Pancreas (tissue), 10 donors: ENCODE measurements at regions of chr1 and their contacts with region 1.

Region 1: DNA sequence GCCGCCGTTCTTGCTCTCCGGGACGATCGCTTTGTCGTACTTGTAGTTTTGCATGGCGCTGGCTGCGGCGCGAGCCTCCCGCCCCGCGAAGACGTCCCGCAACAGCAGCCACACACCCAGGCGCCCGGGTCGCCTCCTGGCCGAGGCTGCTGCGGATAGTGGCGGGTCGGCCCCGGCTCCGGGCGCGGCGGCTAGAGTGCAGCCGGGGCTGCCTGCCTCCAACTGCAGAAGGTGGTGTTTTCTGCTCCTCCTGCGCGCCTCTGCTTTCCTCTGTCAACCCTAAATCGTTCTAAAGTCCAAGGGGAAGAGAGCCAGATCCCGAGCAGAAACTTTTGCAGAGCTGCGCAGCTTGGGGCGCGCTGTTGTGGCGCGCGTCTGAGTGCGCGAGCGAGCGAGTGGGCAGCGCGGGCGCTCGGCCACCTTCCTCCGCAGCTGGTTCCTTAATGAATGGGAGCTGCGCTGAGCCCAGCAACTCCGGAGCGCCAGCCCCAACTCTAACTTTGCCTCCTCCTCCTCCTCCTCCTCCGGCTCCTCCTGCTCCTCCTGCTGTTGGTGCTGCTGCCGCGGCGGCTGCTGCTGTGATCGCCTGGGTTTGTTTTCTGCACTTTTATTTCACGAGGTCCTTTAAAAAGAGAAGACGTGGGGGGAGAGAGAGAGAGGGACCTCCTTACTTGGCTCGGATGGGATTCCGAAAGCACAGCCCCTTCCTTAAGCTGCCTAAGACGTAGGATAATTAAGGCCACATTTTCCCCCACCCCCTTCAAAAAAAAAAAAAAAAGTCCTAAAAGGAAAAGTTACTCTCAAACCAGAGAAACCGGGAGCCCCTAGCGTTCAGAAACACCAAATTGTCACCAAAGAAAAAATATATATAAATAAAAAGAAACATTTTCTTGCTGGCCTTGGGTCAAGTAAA is at the start of gene PLPP3:
- DNase-seq: peak; percentile 82 to 91 (median 85)
- ATAC-seq: peak; percentile 82 to 89 (median 86)
- H3K4me3 ChIP-seq: peak within 1 kb of the TSS; percentile 74 to 98 (median 91)
- H3K27ac ChIP-seq: peak within 1 kb of the TSS; percentile 84 to 95 (median 93)
- H3K4me1 ChIP-seq: peaks cover 6 to 43% (median 22%) of the 10 kb centered on the region in 3 donors
- H3K27me3 ChIP-seq: no peaks in the 10 kb centered on the region
- CTCF ChIP-seq: peak in 2 of 4 donors; percentile 23 to 31
- total RNA-seq, gene PLPP3: 14.6 to 29.6 (median 21.8) TPM

Region 2: GRCh38 chr1:55965981-55966461 is 613.2 kb before region 1 on chr1:
- intact Hi-C with region 1: no loop called
- DNase-seq: no peak
- ATAC-seq: no peak
- H3K4me3 ChIP-seq: no peak overlapping the region
- H3K27ac ChIP-seq: no peak overlapping the region
- H3K4me1 ChIP-seq: no peaks in the 10 kb centered on the region
- H3K27me3 ChIP-seq: no peaks in the 10 kb centered on the region
- CTCF ChIP-seq: no peak

Region 3: GRCh38 chr1:56357927-56358690 is 221.1 kb before region 1 on chr1:
- intact Hi-C with region 1: no loop called
- DNase-seq: no peak
- ATAC-seq: no peak
- H3K4me3 ChIP-seq: no peak overlapping the region
- H3K27ac ChIP-seq: no peak overlapping the region
- H3K4me1 ChIP-seq: peaks cover 0 to 9% (median 6%) of the 10 kb centered on the region in 3 donors
- H3K27me3 ChIP-seq: no peaks in the 10 kb centered on the region
- CTCF ChIP-seq: no peak

Region 4: DNA sequence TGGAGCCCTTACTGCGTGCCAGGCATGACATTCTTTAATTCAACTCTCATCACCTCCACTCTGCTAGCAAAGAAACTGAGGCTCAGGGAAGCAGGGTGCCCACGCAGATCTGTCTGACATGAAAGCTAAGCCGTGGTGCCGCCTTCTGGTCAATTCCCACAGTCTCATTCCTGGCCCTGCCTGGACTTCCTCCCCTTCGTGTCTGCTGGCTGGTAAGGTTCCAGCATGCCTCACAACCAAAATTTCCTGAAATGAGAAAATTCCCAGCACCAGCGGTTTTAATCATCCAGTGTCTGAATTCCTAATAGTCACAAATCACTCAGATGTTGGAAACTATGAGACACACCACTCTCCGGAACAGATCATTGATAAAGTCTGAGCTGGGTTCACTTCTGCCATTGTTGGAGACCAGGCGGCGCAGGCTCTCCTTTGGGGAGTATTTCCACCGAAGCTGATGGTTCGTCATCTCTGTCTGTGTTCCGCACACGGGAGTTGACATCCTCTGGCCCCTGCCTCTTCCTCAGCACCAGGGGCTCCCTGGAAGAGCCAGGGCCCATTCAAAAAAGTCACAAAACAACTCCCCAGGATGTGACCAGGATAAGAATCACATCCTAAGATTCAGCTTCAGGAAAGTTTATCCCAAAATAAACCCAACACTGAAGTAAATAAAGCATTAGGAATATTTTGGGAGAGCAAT is 167.6 kb before region 1 on chr1:
- intact Hi-C with region 1: loop called in 2 of 3 experiments (anchors 5 to 10 kb)
- DNase-seq: peak in 4 of 6 donors; percentile 51 to 58 (median 55)
- ATAC-seq: peak; percentile 42 to 58 (median 54)
- H3K4me3 ChIP-seq: no peak overlapping the region
- H3K27ac ChIP-seq: peak overlapping the region in 2 of 4 donors; percentile 10 to 26
- H3K4me1 ChIP-seq: peaks cover 12 to 34% (median 13%) of the 10 kb centered on the region in 3 donors
- H3K27me3 ChIP-seq: no peaks in the 10 kb centered on the region
- CTCF ChIP-seq: no peak

Region 5: GRCh38 chr1:56525489-56526041 is 53.7 kb before region 1 on chr1:
- intact Hi-C with region 1: loop called in 1 of 3 experiments (anchors 10 kb)
- DNase-seq: peak in 1 of 6 donors; percentile 45
- ATAC-seq: peak; percentile 31 to 68 (median 50)
- H3K4me3 ChIP-seq: no peak overlapping the region
- H3K27ac ChIP-seq: no peak overlapping the region
- H3K4me1 ChIP-seq: peaks cover 10 to 34% (median 12%) of the 10 kb centered on the region in 3 donors
- H3K27me3 ChIP-seq: no peaks in the 10 kb centered on the region
- CTCF ChIP-seq: no peak